SK-N-SH (cell line): ENCODE measurements at regions of chr2 and their contacts with region 1.

Region 1: DNA sequence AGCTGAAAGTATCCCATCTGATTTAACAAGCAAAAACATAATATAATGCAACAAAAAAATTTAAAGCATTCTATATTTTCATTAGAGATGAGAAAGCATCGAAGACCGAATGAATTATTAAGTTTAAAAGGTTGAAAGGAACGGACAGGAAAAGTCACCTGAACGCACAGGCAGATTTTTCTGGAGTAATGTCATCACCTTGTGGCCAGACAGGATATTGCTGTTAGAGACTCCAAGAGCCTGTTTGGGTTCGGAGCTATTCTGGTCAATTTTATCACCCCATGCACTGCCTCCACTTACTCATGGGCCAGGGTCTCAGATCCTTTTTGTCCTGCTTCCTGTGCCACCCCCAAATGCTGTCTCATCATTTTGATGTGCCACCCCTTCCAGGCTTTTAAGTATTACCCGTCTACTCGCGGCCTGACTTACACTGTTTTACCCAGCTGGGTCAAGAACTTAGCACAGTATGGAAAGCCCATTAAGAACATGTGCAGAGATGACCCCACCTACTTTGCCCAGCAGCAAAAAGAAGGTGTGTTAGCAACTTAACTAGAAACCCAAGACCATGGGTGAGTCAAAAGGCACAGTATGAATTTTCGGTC is 27.3 kb downstream of the GKN2 start:
- DNase-seq: peak; percentile 55
- H3K4me3 ChIP-seq: no peak overlapping the region; a peak in 1 of 4 replicates
- H3K27ac ChIP-seq: no peak overlapping the region
- H3K4me1 ChIP-seq: no peaks in the 10 kb centered on the region
- H3K27me3 ChIP-seq: no peaks in the 10 kb centered on the region; the same call in 1 of the 2 replicates
- CTCF ChIP-seq: peak; percentile 89
- EP300 ChIP-seq: no peak
- RAD21 ChIP-seq: peak; percentile 94

Region 2: DNA sequence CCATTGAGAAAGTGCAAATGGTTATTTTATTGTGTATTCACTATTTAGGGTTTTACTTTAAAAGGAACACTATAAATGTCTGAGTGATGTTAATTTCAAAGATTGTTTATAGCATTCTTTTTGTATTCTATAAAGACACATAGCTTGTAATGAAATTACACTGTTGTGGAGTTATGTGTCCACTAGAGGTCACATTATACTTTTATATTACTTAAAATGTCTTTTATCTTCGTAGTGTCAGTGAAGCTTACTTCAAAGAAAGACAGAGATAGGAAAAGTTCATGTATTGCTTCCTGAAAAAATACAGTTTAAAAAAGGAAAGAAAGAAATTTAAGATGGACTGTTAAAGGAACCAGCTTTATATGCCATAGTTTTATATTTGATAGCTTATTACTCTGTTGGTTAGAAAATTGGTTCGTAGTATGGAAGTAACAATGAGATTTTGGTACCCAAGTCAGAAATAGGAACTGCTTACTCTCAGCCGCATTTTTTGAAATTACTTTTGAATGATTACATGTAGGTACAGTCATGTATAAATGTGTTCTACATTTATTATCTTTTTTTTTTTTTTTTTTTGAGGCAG is 437.5 kb before region 1 on chr2:
- CTCF ChIA-PET with region 1: interaction called, 26 read pairs
- POLR2A ChIA-PET with region 1: no interaction called
- DNase-seq: peak; percentile 36
- H3K4me3 ChIP-seq: no peak overlapping the region; a peak in 1 of 4 replicates
- H3K27ac ChIP-seq: no peak overlapping the region
- H3K4me1 ChIP-seq: no peaks in the 10 kb centered on the region; a peak in 1 of 4 replicates
- H3K27me3 ChIP-seq: no peaks in the 10 kb centered on the region
- CTCF ChIP-seq: peak; percentile 72
- EP300 ChIP-seq: no peak
- RAD21 ChIP-seq: peak; percentile 66

Region 3: GRCh38 chr2:68689553-68690537 is 235.6 kb before region 1 on chr2:
- CTCF ChIA-PET with region 1: interaction called, 14 read pairs
- POLR2A ChIA-PET with region 1: no interaction called
- DNase-seq: no peak
- H3K4me3 ChIP-seq: no peak overlapping the region
- H3K27ac ChIP-seq: no peak overlapping the region
- H3K4me1 ChIP-seq: peaks cover 0 to 5% of the 10 kb centered on the region in 2 experiments; a peak in 3 of 4 replicates
- H3K27me3 ChIP-seq: no peaks in the 10 kb centered on the region
- CTCF ChIP-seq: no peak
- EP300 ChIP-seq: no peak
- RAD21 ChIP-seq: no peak

Region 4: GRCh38 chr2:68715353-68716041 is 209.9 kb before region 1 on chr2:
- CTCF ChIA-PET with region 1: interaction called, 61 read pairs
- POLR2A ChIA-PET with region 1: no interaction called
- DNase-seq: peak; percentile 62
- H3K4me3 ChIP-seq: no peak overlapping the region; a peak in 1 of 4 replicates
- H3K27ac ChIP-seq: no peak overlapping the region
- H3K4me1 ChIP-seq: no peaks in the 10 kb centered on the region; a peak in 1 of 4 replicates
- H3K27me3 ChIP-seq: no peaks in the 10 kb centered on the region
- CTCF ChIP-seq: peak; percentile 71
- EP300 ChIP-seq: no peak
- RAD21 ChIP-seq: peak; percentile 74

Region 5: DNA sequence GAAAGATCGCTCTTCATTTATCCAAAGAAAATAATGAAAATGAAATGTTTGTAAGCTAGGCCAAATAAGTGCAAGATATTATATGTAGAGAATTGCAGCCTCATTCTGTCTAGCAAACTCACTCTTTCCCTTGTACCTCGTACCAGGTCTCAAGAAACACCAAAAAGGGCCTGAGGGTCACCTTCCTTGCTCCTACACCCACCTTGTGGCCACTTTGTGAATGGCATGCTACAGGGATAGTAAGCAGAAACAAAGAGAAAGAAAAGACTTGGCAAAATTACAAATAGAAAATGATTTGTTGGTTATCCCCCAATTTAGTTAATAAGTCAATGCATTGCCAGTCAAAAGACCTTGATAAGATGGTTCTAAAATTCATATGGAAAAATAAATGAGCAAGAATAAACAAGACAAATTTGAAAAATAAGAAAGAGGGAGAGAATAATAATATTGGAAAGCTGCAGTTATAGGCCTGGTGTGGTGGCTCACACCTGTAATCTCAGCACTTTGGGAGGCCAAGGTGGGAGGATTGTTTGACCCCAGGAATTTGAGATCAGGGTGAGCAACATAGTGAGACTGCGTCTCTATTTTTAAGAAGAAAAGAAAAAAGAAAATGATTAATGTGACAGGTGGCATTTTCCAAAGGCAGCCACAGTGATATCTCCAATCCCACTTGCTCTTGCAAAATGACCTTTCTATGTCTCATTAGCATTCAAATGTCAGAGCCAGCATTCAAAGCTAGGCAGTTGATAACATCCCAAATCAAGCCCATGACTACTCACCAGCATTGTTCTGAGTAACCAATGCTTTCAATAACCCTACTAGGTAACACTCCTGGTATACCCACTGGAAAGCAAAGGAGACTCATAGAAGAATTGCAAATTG is 15.4 kb before region 1 on chr2:
- CTCF ChIA-PET with region 1: interaction called, 52 read pairs
- POLR2A ChIA-PET with region 1: no interaction called
- DNase-seq: peak; percentile 70
- H3K4me3 ChIP-seq: peak overlapping the region in 1 of 2 experiments; percentile 6; a peak in 1 of 4 replicates
- H3K27ac ChIP-seq: no peak overlapping the region
- H3K4me1 ChIP-seq: peaks cover 0 to 8% of the 10 kb centered on the region in 2 experiments; a peak in 2 of 4 replicates
- H3K27me3 ChIP-seq: no peaks in the 10 kb centered on the region
- CTCF ChIP-seq: peak; percentile 92
- EP300 ChIP-seq: no peak
- RAD21 ChIP-seq: peak; percentile 96

Region 6: DNA sequence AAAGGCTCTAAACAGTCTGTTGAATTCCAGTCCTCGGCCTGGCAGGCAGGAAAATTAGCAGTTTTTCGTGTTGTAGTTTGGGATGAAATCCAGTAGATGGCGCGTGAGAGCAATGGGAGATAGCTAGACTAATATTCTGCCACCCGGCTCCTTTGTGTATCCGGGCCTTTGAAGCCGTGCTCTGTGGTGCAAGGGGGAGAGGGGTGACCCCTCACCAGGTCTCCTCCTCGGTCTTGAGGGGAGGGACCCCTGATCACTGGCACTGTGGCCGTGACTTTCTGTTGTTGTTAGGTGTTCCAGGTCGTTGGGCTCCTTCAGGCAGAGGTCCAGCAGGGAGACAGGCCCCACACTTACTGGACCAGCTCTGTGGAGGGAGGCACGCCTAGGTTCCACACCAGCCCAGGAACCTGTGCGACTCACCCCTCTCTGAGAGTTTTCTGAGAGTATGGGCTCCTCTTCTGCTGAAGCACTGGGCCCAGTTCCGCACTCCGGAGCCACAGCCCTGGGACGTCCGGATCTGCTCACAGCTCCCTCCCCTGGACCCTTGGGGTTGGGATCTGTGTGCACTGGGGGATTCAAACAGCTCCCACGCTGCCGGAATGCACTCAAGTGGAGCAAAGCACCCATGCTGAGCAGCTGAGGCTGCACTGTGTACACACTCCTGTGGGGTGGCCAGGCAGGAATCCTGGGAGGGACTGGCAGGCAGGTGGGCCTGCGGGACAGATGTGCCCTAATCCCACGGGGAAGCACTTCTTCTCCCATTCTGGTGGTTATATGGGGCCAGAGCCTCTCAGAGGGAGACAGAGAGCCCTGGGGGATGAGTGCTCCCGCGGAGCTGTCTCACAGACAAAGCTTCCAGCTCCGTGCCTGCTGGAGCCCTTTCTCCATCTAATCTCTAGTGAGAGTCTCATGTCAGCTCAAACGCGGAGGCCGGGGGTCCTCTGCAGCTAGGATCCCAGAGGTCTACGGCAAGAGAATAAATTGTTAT is 18.5 kb after region 1 on chr2:
- CTCF ChIA-PET with region 1: interaction called, 59 read pairs
- POLR2A ChIA-PET with region 1: no interaction called
- DNase-seq: peak; percentile 68
- H3K4me3 ChIP-seq: no peak overlapping the region
- H3K27ac ChIP-seq: no peak overlapping the region; a peak in 1 of 4 replicates
- H3K4me1 ChIP-seq: peaks cover 0 to 2% of the 10 kb centered on the region in 2 experiments; a peak in 1 of 4 replicates
- H3K27me3 ChIP-seq: no peaks in the 10 kb centered on the region
- CTCF ChIP-seq: peak; percentile 78
- EP300 ChIP-seq: no peak
- RAD21 ChIP-seq: peak; percentile 78

Region 7: GRCh38 chr2:69131983-69132675 is 206.7 kb after region 1 on chr2:
- CTCF ChIA-PET with region 1: no interaction called
- POLR2A ChIA-PET with region 1: no interaction called
- DNase-seq: no peak
- H3K4me3 ChIP-seq: no peak overlapping the region
- H3K27ac ChIP-seq: no peak overlapping the region
- H3K4me1 ChIP-seq: peaks cover 0 to under 1% of the 10 kb centered on the region in 2 experiments; a peak in 1 of 4 replicates
- H3K27me3 ChIP-seq: no peaks in the 10 kb centered on the region
- CTCF ChIP-seq: no peak
- EP300 ChIP-seq: no peak
- RAD21 ChIP-seq: no peak